HEK293 (cell line): ENCODE measurements at regions of chr13 and their contacts with region 1.

Region 1: GRCh38 chr13:28658796-28659620 is at the start of gene POMP:
- H3K4me3 ChIP-seq: peak within 1 kb of the TSS; percentile 91
- H3K27ac ChIP-seq: peak within 1 kb of the TSS; percentile 84
- H3K4me1 ChIP-seq: no peaks in the 10 kb centered on the region
- CTCF ChIP-seq: 0 out of 2 replicates have a peak, but pooled peaks have one; percentile 5

Region 2: DNA sequence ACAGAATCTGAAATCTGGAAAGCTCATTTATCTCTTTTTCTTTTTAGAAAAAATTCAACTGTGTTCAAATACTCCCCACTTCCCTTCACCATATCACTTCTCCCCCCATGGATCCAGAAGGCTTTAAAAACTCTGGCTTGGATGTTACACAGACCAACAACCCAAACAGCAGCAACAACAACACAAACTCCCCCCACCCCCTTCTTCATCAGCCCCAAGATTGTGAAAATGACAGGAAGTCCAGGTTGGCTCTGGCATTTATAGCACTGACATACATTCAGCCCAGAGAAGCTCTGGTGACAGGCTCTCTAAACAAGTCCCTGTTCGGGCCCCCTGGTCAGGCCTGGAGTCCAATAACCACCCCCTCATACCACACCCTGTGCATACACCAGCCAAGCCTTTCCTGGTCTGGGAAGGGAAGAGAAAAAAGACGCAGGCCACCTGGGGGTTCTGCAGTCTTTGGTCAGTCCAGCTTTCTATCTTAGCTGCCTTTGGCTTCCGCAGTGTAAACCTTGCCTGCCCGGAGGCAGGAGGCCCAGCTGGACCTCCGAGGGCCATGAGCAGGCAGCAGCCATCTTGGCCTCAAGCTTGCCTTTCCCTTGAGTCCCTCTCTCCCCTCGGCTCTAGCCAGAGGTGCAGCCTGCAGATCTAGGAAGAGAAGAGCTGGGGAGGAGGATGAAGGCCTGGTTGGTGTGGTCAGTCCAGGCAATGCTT is 696.7 kb before region 1 on chr13:
- CTCF ChIA-PET with region 1: no interaction called
- POLR2A ChIA-PET with region 1: interaction called, 11 read pairs
- H3K4me3 ChIP-seq: no peak overlapping the region
- H3K27ac ChIP-seq: no peak overlapping the region
- H3K4me1 ChIP-seq: no peaks in the 10 kb centered on the region
- CTCF ChIP-seq: no peak

Region 3: DNA sequence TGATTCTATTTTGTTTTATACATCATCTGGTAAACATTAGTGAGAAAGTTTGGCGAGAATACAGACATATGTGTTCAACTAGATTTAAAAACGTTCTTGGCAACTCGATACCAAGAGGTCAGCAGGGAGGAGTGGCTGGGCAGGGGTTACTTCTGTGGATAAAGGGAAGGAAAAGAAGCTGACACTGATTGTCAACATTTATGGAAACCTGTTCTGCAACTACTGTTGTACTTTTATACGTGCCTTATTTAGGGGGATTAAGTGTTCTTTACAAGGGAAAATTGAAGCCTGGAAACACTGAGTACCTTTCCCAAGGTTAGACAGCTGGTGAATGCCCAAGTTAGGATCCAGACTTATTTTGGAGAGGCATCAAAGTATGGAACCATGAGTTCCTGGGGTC is 226.2 kb after region 1 on chr13:
- CTCF ChIA-PET with region 1: no interaction called
- POLR2A ChIA-PET with region 1: no interaction called
- H3K4me3 ChIP-seq: no peak overlapping the region
- H3K27ac ChIP-seq: no peak overlapping the region
- H3K4me1 ChIP-seq: no peaks in the 10 kb centered on the region
- CTCF ChIP-seq: no peak